Posterior cingulate gyrus (tissue), 11 donors: ENCODE measurements at regions of chr10 and their contacts with region 1.

Region 1: DNA sequence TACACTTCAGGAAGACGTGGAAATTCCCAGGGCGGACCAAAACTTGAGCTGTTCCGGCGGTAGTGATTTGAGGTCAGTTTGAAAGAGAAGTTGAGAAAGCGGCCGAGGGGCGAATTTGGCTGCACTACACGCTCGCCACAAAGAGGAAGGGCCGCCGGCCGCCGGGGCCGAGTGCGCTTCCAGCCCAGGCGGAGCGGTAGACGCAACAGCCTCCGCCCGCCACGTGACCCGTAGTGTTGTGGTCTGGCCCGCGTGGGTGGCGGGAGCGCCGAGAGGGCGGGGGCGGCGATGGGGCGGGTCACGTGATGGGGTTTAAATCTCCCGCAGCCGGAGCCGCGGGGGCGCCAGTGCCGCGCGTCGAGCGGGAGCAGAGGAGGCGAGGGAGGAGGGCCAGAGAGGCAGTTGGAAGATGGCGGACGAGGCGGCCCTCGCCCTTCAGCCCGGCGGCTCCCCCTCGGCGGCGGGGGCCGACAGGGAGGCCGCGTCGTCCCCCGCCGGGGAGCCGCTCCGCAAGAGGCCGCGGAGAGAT is at the start of gene SIRT1:
- DNase-seq: peak; percentile 91 to 99 (median 96)

Region 2: GRCh38 chr10:67849331-67850011 is 34.9 kb before region 1 on chr10:
- intact Hi-C with region 1: loop called (anchors 5 kb)
- DNase-seq: peak; percentile 92 to 99 (median 97)

Region 3: GRCh38 chr10:68074775-68075549 is 190.6 kb after region 1 on chr10 and contains the start of gene HERC4:
- intact Hi-C with region 1: loop called (anchors 1 kb)
- DNase-seq: peak; percentile 86 to 98 (median 90)

Region 4: DNA sequence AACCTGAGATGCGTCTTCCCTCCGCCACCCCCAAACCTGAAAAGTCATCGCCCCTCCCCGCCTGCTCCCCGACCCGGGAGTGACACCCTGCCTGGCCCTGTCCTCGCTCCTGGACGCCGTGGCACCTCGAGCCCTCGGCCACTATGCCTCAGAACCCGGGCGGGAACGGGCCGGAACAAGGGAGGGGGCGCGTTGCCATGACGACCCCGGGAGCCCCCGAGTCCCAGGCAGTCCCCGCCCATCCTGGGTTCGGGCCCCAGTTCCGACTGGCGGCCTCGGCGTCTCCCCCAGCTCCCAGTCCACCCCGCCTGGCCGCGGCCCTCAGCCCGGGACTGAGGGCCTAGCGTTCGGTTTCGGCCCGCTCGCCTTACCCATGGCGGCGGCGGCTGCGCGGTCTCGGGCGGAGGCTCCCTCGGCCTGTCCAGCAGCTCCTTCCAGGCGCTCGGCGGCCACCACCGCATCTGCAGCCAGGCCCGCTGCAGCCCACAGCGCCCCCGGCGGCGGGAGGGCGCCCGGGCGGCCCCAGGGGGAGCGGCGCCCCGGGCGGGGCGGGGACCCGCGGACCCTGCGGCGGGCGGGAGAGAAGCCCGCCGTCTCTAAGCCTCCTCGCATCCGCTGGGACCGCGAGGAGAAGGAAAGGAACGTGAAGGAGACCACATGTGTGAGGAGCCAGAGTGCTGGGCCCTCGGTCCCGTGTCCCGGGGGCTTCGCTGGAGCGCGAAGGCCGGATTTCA is 522.6 kb after region 1 on chr10 and contains the start of gene RUFY2:
- intact Hi-C with region 1: loop called (anchors 5 kb)
- DNase-seq: peak; percentile 62 to 97 (median 78)